CD4-positive, alpha-beta memory T cell (primary cell): ENCODE measurements at regions of chr2 and their contacts with region 1.

Region 1: DNA sequence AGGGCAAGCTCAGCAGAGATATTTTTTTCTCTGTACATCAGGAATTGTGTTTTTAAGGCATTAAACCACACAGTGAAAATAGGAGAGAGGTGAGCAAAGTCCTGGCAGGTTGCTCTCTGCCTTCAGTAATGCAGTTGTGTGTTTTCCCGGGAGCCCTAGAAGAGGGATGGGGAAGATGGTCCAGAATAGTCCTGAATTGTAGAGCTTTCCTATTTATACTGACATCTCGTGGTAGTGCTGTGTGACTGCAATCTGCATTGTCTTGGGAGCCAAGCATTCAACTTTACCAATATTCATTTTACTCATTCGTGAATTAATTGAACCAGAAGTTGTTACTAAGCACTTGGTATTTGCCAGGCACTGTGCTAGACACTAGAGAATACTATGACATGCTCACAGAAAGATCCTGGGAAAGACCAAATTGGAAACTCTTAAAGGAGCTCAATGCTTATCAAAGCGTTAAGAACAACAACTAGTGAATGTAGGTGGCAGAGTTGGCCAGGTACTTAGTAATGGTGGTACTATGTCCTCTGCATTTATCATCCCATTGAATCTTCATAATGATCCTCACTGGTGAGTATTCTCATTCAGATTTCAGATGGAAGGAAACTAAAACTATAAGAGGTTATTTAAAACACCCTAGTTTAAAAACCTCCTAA is 214.6 kb downstream of the TRIB2 start:
- DNase-seq: peak in 4 of 5 donors; percentile 13 to 25 (median 22)
- H3K4me3 ChIP-seq: no peak overlapping the region
- H3K4me3 Mint-ChIP-seq: no peak overlapping the region
- H3K27ac ChIP-seq: no peak overlapping the region
- H3K27ac Mint-ChIP-seq: no peak overlapping the region
- H3K4me1 ChIP-seq: peaks cover 15% of the 10 kb centered on the region
- H3K4me1 Mint-ChIP-seq: peaks cover 11 to 23% (median 17%) of the 10 kb centered on the region in 4 donors
- H3K27me3 ChIP-seq: no peaks in the 10 kb centered on the region
- H3K27me3 Mint-ChIP-seq: no peaks in the 10 kb centered on the region

Region 2: DNA sequence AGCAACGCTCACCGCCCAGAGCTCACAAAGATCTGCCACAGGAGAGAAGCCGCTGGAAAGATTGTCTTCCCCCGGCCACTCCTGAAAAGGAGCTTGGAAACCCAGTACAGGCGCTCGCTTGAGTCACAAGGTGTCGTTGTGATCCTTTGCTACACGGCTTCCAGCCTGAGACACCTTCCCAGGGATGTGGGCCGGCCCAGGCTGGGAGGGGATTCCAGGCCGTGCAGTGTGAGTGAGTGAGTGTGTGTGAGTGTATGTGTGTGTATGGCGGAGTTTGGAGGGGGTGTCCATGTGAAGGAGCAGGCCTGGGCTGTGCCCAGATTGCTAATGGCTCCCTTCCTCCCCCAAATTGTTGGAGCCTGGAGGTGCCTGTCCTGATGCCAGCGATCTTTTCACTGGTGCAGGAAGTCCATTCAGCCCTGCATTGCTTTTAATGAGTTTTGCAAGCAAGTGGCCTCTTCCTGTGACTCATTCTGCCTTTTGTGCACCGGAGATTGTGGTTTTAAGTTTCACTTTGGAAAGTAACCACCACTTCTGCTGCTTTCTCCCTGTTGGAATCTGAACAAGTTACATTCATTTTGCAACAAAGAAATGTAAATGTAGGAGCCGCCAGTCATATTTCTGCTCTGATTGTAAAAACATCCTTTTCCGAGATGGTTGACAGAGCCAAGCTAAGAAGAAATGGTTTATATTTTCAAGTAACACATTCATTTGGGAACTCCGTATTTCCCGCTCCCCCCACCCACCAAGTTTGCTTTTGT is 1101.2 kb before region 1 on chr2:
- CTCF ChIA-PET with region 1: interaction called, 27 read pairs
- POLR2A ChIA-PET with region 1: no interaction called
- intact Hi-C with region 1: loop called (anchors 1 kb)
- DNase-seq: peak; percentile 62 to 76 (median 68)
- H3K4me3 ChIP-seq: peak overlapping the region; percentile 52 to 53
- H3K4me3 Mint-ChIP-seq: peak overlapping the region; percentile 83 to 92 (median 85)
- H3K27ac ChIP-seq: no peak overlapping the region
- H3K27ac Mint-ChIP-seq: peak overlapping the region; percentile 42 to 90 (median 82)
- H3K4me1 ChIP-seq: peaks cover 28% of the 10 kb centered on the region
- H3K4me1 Mint-ChIP-seq: peaks cover 23 to 45% (median 36%) of the 10 kb centered on the region in 4 donors
- H3K27me3 ChIP-seq: no peaks in the 10 kb centered on the region
- H3K27me3 Mint-ChIP-seq: no peaks in the 10 kb centered on the region

Region 3: GRCh38 chr2:12416600-12416999 is 514.7 kb before region 1 on chr2:
- CTCF ChIA-PET with region 1: interaction called, 31 read pairs
- POLR2A ChIA-PET with region 1: interaction called, 4 read pairs
- intact Hi-C with region 1: loop called (anchors 1 kb)
- DNase-seq: peak; percentile 64 to 71 (median 68)
- H3K4me3 ChIP-seq: no peak overlapping the region
- H3K4me3 Mint-ChIP-seq: peak overlapping the region in 7 of 8 donors; percentile 9 to 68 (median 52)
- H3K27ac ChIP-seq: no peak overlapping the region
- H3K27ac Mint-ChIP-seq: peak overlapping the region in 6 of 7 donors; percentile 0 to 65 (median 46)
- H3K4me1 ChIP-seq: peaks cover 49% of the 10 kb centered on the region
- H3K4me1 Mint-ChIP-seq: peaks cover 34 to 75% (median 49%) of the 10 kb centered on the region in 4 donors
- H3K27me3 ChIP-seq: no peaks in the 10 kb centered on the region
- H3K27me3 Mint-ChIP-seq: no peaks in the 10 kb centered on the region

Region 4: GRCh38 chr2:12436935-12437561 is 494.3 kb before region 1 on chr2:
- CTCF ChIA-PET with region 1: interaction called, 15 read pairs
- POLR2A ChIA-PET with region 1: no interaction called
- intact Hi-C with region 1: no loop called
- DNase-seq: no peak
- H3K4me3 ChIP-seq: no peak overlapping the region
- H3K4me3 Mint-ChIP-seq: peak overlapping the region in 1 of 8 donors; percentile 69
- H3K27ac ChIP-seq: no peak overlapping the region
- H3K27ac Mint-ChIP-seq: peak overlapping the region in 1 of 7 donors; percentile 18
- H3K4me1 ChIP-seq: peaks cover 40% of the 10 kb centered on the region
- H3K4me1 Mint-ChIP-seq: peaks cover 25 to 62% (median 33%) of the 10 kb centered on the region in 4 donors
- H3K27me3 ChIP-seq: no peaks in the 10 kb centered on the region
- H3K27me3 Mint-ChIP-seq: no peaks in the 10 kb centered on the region

Region 5: DNA sequence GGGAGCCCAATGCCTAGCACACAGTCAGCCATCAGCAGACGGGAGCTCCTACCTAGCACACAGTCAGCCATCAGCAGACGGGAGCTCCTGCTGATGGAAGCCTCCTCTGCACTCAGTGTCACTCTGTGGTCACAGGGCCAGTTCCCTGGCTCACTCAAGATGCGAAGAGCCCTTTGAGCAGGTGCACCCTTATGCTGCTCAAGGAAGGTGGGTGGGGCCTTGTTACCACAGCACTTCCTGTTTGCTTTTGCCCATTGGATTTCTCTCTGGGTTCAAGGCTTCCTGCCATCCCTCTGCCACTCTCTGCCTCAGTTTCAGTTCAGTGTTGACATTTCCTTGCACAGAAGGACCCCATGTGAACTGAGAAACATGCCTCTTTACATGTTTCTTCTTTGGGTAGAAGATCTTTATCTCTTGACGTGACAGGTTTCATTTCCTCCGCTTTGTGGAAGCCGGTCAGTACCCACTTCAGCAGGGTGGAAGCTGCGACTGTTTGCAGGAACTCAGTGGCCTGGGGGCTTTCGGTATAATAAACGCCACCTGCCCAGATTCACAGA is 203.0 kb before region 1 on chr2:
- CTCF ChIA-PET with region 1: interaction called, 237 read pairs
- POLR2A ChIA-PET with region 1: interaction called, 5 read pairs
- intact Hi-C with region 1: no loop called
- DNase-seq: peak; percentile 76 to 86 (median 83)
- H3K4me3 ChIP-seq: peak overlapping the region; percentile 29 to 34
- H3K4me3 Mint-ChIP-seq: peak overlapping the region; percentile 65 to 86 (median 78)
- H3K27ac ChIP-seq: peak overlapping the region; percentile 47
- H3K27ac Mint-ChIP-seq: peak overlapping the region; percentile 87 to 96 (median 91)
- H3K4me1 ChIP-seq: peaks cover 100% of the 10 kb centered on the region
- H3K4me1 Mint-ChIP-seq: peaks cover 70 to 99% (median 92%) of the 10 kb centered on the region in 4 donors
- H3K27me3 ChIP-seq: no peaks in the 10 kb centered on the region
- H3K27me3 Mint-ChIP-seq: no peaks in the 10 kb centered on the region

Region 6: GRCh38 chr2:12856934-12857601 is 74.2 kb before region 1 on chr2:
- CTCF ChIA-PET with region 1: interaction called, 8 read pairs
- POLR2A ChIA-PET with region 1: interaction called, 6 read pairs
- intact Hi-C with region 1: loop called (anchors 1 kb)
- DNase-seq: peak; percentile 68 to 83 (median 78)
- H3K4me3 ChIP-seq: peak overlapping the region in 1 of 2 donors; percentile 7
- H3K4me3 Mint-ChIP-seq: peak overlapping the region in 1 of 8 donors; percentile 1
- H3K27ac ChIP-seq: no peak overlapping the region
- H3K27ac Mint-ChIP-seq: peak overlapping the region in 3 of 7 donors; percentile 77 to 82 (median 80)
- H3K4me1 ChIP-seq: peaks cover 71% of the 10 kb centered on the region
- H3K4me1 Mint-ChIP-seq: peaks cover 0 to 21% (median 8%) of the 10 kb centered on the region in 4 donors
- H3K27me3 ChIP-seq: no peaks in the 10 kb centered on the region
- H3K27me3 Mint-ChIP-seq: no peaks in the 10 kb centered on the region

Region 7: DNA sequence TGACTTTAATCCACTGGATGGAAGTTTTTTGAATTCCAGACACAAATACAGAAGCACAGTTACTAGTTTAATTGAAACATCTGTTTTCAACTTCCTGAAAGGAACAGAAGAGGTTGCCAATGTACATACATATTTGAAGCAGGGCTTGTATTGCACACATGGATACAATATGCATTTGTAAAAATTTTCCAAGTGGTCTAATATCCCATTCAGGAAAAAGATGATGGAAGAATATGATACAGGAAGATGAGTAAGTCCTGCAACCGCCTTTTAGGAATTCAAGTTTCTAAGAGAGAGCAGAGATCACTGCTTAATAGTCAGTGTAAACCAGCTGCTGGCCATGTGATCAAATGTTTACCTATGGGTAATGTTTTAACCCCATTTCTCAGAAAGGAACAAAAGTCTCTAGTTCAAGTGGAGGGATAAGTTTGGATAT is 50.9 kb after region 1 on chr2:
- CTCF ChIA-PET with region 1: no interaction called
- POLR2A ChIA-PET with region 1: no interaction called
- intact Hi-C with region 1: no loop called
- DNase-seq: no peak
- H3K4me3 ChIP-seq: no peak overlapping the region
- H3K4me3 Mint-ChIP-seq: no peak overlapping the region
- H3K27ac ChIP-seq: no peak overlapping the region
- H3K27ac Mint-ChIP-seq: no peak overlapping the region
- H3K4me1 ChIP-seq: peaks cover 2% of the 10 kb centered on the region
- H3K4me1 Mint-ChIP-seq: peaks cover 0 to 2% (median 1%) of the 10 kb centered on the region in 4 donors
- H3K27me3 ChIP-seq: no peaks in the 10 kb centered on the region
- H3K27me3 Mint-ChIP-seq: peaks cover 0 to 3% of the 10 kb centered on the region in 2 donors

Region 8: DNA sequence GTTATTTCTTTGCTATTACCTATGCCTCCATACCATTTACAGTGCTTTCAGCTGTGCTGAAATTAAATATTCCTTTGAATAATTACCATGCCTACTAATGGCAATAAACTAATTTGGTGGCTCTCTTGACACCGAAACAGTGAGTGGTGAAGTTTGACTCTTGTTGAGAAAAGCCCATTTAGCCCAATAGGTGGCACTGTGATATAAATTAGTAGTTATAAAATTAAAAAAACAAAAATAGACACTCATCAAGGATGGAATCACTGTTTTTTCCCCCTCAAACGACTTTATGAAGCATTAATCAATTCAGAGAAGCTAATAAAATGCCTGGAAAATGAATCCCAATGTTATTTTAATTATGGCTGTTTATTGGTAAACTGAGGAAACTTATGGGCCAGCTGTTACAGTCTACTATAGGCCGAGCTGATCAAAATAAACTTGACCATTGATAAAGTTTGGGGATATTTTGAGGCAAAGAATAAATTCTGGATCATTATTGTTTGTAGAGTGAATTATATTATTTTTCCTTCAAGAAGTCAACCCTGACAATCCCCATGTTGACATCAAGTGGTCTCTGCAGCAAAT is 125.0 kb after region 1 on chr2:
- CTCF ChIA-PET with region 1: no interaction called
- POLR2A ChIA-PET with region 1: no interaction called
- intact Hi-C with region 1: no loop called
- DNase-seq: no peak
- H3K4me3 ChIP-seq: no peak overlapping the region
- H3K4me3 Mint-ChIP-seq: no peak overlapping the region
- H3K27ac ChIP-seq: no peak overlapping the region
- H3K27ac Mint-ChIP-seq: no peak overlapping the region
- H3K4me1 ChIP-seq: no peaks in the 10 kb centered on the region
- H3K4me1 Mint-ChIP-seq: no peaks in the 10 kb centered on the region
- H3K27me3 ChIP-seq: peaks cover 6% of the 10 kb centered on the region
- H3K27me3 Mint-ChIP-seq: peaks cover 17 to 21% of the 10 kb centered on the region in 2 donors